Astrocyte of the cerebellum (primary cell): ENCODE measurements at regions of chr2 and their contacts with region 1.

Region 1: DNA sequence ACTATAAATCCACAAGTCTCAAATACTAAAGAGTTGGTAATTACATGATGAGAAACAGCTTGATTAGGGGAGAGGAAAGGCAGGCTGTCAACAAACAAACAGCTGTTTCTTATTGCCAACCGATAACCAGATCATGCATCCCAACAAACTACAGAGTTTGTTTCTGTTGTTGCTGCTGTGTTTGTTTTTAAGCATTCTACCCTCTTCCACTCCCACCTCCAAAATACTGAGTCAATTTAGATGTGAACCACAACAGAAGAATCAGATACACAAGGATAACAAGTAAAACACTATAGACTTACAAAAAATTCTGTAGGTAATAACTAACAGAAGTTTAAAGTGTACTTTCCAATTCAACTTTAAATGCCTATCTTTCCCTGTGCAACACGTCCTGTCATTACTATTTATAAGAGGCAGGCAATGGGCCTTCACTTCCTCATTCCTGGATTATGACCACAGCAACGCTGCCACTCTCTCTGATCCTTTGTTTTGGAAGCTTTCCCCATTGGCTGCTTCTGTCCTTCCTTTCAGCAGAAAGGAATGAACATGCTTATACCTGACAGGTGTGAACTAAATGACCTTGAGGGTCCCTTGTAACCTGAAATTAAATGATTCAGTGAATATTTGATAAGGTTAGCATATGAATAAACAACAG is 152.0 kb downstream of the SRBD1 start:
- DNase-seq: peak; percentile 28
- H3K4me3 ChIP-seq: no peak overlapping the region
- CTCF ChIP-seq: no peak

Region 2: GRCh38 chr2:45404807-45405297 is 54.2 kb before region 1 on chr2:
- in situ Hi-C with region 1: loop called (anchors 5 kb)
- DNase-seq: no peak
- H3K4me3 ChIP-seq: no peak overlapping the region
- CTCF ChIP-seq: no peak